WTC11 (cell line): ENCODE measurements at regions of chr11 and their contacts with region 1.

Region 1: DNA sequence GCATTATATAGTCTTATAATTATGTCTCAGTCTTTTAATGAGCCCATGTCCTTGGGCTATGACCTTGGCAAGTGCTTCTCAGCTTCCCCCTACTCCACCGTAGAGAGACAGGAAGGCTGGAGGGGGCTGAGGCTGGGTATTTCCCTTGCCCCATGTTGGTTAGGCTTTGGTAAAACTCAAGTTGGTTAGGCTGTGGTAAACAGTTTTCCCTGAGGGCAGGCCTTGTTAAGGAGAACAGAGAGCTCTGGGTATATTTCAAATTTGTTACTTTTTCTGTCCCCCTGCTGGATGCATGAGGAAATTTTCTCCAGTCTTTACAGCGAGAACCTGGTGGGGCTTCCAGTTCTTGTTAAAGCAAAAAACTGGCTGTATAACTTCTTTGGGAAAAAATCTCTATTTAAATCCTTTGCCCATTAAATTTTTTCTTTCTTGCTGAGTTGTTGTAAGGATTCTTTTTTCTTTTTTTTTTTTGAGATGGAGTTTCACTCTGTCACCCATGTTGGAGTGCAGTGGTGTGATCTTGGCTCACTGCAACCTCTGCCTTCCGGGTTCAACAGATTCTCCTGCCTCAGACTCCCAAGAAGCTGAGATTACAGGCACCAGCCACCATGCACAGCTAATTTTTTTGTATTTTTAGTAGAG is 12.2 kb upstream of the DCHS1 start:
- DNase-seq: no peak
- ATAC-seq: peak; percentile 96
- H3K4me3 Mint-ChIP-seq: no peak overlapping the region
- H3K27ac Mint-ChIP-seq: no peak overlapping the region
- H3K4me1 Mint-ChIP-seq: no peaks in the 10 kb centered on the region
- H3K27me3 Mint-ChIP-seq: peaks cover 2% of the 10 kb centered on the region; the same call in 1 of the 2 replicates
- CTCF ChIP-seq: peak; percentile 64

Region 2: DNA sequence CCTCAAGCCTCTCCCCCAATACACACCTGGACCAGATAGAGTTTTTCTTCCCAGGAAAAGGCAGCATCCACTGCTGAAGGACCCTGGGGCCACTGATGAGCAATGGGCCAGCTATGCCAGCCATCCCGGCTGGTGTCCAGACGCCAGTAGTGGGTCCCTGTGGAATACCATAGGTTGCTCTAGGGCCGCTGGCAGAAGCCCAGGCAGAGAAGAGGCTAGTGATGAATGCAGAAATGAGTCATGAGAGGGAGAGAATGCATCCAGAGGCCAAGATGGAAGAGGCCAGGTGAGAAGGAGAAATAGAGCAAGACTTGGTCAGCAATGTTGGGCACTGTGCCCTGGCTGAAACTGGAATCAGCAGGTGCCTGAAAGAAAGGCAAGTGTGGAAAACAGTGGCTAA is 236.0 kb before region 1 on chr11:
- CTCF ChIA-PET with region 1: no interaction called
- POLR2A ChIA-PET with region 1: no interaction called
- DNase-seq: no peak
- ATAC-seq: no peak
- H3K4me3 Mint-ChIP-seq: no peak overlapping the region
- H3K27ac Mint-ChIP-seq: no peak overlapping the region
- H3K4me1 Mint-ChIP-seq: peaks cover 7% of the 10 kb centered on the region
- H3K27me3 Mint-ChIP-seq: peaks cover 8% of the 10 kb centered on the region
- CTCF ChIP-seq: no peak

Region 3: DNA sequence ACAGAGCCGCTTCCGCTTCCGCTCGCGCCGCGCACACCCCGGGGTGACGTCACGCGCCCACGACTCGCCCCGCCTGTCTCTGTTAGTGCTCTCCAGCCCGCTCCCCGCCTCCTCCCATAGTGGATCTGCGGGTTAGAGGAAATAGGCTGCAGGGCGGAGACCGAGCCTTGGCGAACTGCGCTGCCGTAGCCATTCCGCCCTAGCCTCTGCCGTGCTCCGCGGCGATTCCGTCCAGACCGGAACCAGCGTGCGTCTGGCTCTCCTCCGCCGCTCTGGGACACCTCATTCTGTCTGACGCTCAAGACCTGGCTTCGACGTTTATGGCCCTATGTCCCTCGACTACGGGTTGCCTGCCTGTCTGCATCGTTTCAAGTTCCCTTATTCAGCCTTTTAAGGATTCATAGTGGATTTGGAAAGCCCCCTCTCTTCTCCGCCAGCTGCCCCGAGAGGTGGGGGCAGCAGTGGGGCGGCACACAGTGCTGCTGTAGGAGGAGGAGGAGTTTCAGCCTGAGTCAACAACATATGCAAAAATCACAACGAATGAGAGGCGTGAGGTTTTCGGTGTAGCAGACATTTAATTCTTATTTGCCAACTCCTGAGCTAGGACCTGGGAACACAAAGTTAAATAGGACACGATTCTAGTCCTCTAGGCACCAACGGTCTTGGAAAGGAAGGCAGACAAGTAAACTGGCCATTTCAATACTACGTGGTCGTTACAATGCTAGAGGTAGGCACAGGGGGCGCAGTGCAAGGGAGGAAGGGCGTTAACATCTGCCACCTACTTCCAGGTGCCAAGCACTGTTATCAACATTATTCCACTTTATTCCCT is 55.4 kb before region 1 on chr11 and contains the start of gene TAF10:
- CTCF ChIA-PET with region 1: interaction called, 13 read pairs
- POLR2A ChIA-PET with region 1: interaction called, 3 read pairs
- DNase-seq: peak; percentile 95
- ATAC-seq: peak; percentile 85
- H3K4me3 Mint-ChIP-seq: peak within 1 kb of the TSS; percentile 88
- H3K27ac Mint-ChIP-seq: peak within 1 kb of the TSS; percentile 86
- H3K4me1 Mint-ChIP-seq: peaks cover 8% of the 10 kb centered on the region
- H3K27me3 Mint-ChIP-seq: no peaks in the 10 kb centered on the region
- CTCF ChIP-seq: no peak
- total RNA-seq, gene TAF10: 165 to 186 TPM (median 178 TPM) in 3 replicates

Region 4: GRCh38 chr11:6619004-6619745 is 48.7 kb before region 1 on chr11 and contains the start of gene TPP1:
- CTCF ChIA-PET with region 1: interaction called, 13 read pairs
- POLR2A ChIA-PET with region 1: no interaction called
- DNase-seq: peak; percentile 92
- ATAC-seq: peak; percentile 99
- H3K4me3 Mint-ChIP-seq: no peak within 1 kb of the TSS
- H3K27ac Mint-ChIP-seq: no peak within 1 kb of the TSS
- H3K4me1 Mint-ChIP-seq: no peaks in the 10 kb centered on the region
- H3K27me3 Mint-ChIP-seq: no peaks in the 10 kb centered on the region
- CTCF ChIP-seq: no peak
- total RNA-seq, gene TPP1: 36.2 to 51.4 TPM (median 44.8 TPM) in 3 replicates

Region 5: DNA sequence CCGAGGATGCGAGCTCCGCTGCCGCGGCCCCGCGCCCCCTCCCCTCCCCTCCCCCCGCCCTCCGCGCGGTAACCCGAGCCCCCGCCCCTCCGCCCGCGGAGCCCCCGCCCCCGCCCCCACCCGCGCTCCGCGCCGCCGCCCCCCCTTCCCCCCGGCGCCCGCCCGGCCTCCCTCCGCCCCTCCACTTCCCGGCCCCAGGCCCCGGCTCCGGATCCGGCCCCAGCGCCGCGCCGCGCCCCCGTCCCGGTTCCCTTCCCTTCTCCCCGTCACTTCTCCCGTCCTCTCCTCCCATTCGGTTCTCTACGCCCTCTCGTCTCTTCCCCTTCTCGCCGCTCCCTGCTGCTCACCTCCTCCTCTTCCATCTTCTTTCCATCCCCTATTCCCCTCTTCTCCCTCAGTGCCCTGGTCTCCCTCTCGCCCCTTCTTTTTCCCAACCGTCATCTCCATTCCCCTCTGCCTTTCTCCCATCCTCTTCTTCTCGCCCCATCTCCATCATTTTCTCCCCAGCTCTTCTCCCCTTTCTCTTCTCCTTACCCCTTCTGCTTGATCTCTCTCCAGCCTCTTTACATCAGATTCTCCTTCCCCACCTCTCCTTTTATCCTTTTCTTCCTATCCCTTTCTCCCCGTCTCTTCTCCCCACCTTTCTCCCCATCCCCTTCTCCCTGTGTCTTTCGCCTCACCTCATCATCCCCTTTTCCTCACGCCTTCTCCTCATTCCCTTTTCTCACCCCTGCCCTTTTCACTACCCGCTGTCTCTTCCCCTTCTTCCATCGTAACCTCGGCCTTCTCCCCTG is 11.9 kb before region 1 on chr11 and contains the start of gene DCHS1:
- CTCF ChIA-PET with region 1: interaction called, 14 read pairs
- POLR2A ChIA-PET with region 1: no interaction called
- DNase-seq: peak; percentile 63
- ATAC-seq: peak; percentile 63
- H3K4me3 Mint-ChIP-seq: peak within 1 kb of the TSS; percentile 79
- H3K27ac Mint-ChIP-seq: no peak within 1 kb of the TSS
- H3K4me1 Mint-ChIP-seq: peaks cover 11% of the 10 kb centered on the region
- H3K27me3 Mint-ChIP-seq: peaks cover 19% of the 10 kb centered on the region
- CTCF ChIP-seq: no peak
- total RNA-seq, gene DCHS1: 11.5 to 14.2 TPM (median 12.6 TPM) in 3 replicates

Region 6: GRCh38 chr11:6682936-6683861 is 15.3 kb after region 1 on chr11 and contains the start of gene MRPL17:
- CTCF ChIA-PET with region 1: interaction called, 11 read pairs
- POLR2A ChIA-PET with region 1: no interaction called
- DNase-seq: peak; percentile 99
- ATAC-seq: peak; percentile 95
- H3K4me3 Mint-ChIP-seq: peak within 1 kb of the TSS; percentile 99
- H3K27ac Mint-ChIP-seq: peak within 1 kb of the TSS; percentile 100
- H3K4me1 Mint-ChIP-seq: peaks cover 41% of the 10 kb centered on the region
- H3K27me3 Mint-ChIP-seq: no peaks in the 10 kb centered on the region; the same call in none of the 2 replicates
- CTCF ChIP-seq: peak; percentile 72
- total RNA-seq, gene MRPL17: 68.1 to 77.1 TPM (median 70.1 TPM) in 3 replicates

Region 7: GRCh38 chr11:6705905-6706535 is 38.2 kb after region 1 on chr11:
- CTCF ChIA-PET with region 1: interaction called, 11 read pairs
- POLR2A ChIA-PET with region 1: no interaction called
- DNase-seq: peak; percentile 44
- ATAC-seq: peak; percentile 68
- H3K4me3 Mint-ChIP-seq: no peak overlapping the region
- H3K27ac Mint-ChIP-seq: no peak overlapping the region
- H3K4me1 Mint-ChIP-seq: peaks cover 16% of the 10 kb centered on the region
- H3K27me3 Mint-ChIP-seq: peaks cover 8% of the 10 kb centered on the region; the same call in 1 of the 2 replicates
- CTCF ChIP-seq: peak; percentile 69

Region 8: GRCh38 chr11:6926208-6927029 is 258.6 kb after region 1 on chr11 and contains the start of gene ZNF215:
- CTCF ChIA-PET with region 1: no interaction called
- POLR2A ChIA-PET with region 1: no interaction called
- DNase-seq: peak; percentile 89
- ATAC-seq: peak; percentile 94
- H3K4me3 Mint-ChIP-seq: peak within 1 kb of the TSS; percentile 99
- H3K27ac Mint-ChIP-seq: peak within 1 kb of the TSS; percentile 96
- H3K4me1 Mint-ChIP-seq: peaks cover 36% of the 10 kb centered on the region
- H3K27me3 Mint-ChIP-seq: no peaks in the 10 kb centered on the region; the same call in 1 of the 2 replicates
- CTCF ChIP-seq: no peak
- total RNA-seq, gene ZNF215: 13.8 to 15.8 TPM (median 14.1 TPM) in 3 replicates